A673 (cell line): ENCODE measurements at regions of chr7 and their contacts with region 1.

Region 1: GRCh38 chr7:29988424-29989256 is 961 bp downstream of the SCRN1 start:
- DNase-seq: peak; percentile 41
- H3K4me3 ChIP-seq: peak overlapping the region; percentile 100
- H3K27ac ChIP-seq: peak overlapping the region; percentile 93
- H3K4me1 ChIP-seq: peaks cover 16% of the 10 kb centered on the region
- H3K27me3 ChIP-seq: no peaks in the 10 kb centered on the region
- CTCF ChIP-seq: no peak

Region 2: GRCh38 chr7:29177963-29178600 is 810.6 kb before region 1 on chr7:
- CTCF ChIA-PET with region 1: no interaction called
- POLR2A ChIA-PET with region 1: interaction called, 15 read pairs
- intact Hi-C with region 1: no loop called
- DNase-seq: no peak
- H3K4me3 ChIP-seq: no peak overlapping the region
- H3K27ac ChIP-seq: no peak overlapping the region
- H3K4me1 ChIP-seq: peaks cover 4% of the 10 kb centered on the region
- H3K27me3 ChIP-seq: no peaks in the 10 kb centered on the region
- CTCF ChIP-seq: no peak

Region 3: GRCh38 chr7:30026229-30027064 is 37.8 kb after region 1 on chr7 and contains the start of gene FKBP14:
- CTCF ChIA-PET with region 1: no interaction called
- POLR2A ChIA-PET with region 1: interaction called, 5 read pairs
- intact Hi-C with region 1: loop called (anchors 2 kb)
- DNase-seq: peak; percentile 100
- H3K4me3 ChIP-seq: peak within 1 kb of the TSS; percentile 92
- H3K27ac ChIP-seq: peak within 1 kb of the TSS; percentile 81
- H3K4me1 ChIP-seq: peaks cover 22% of the 10 kb centered on the region
- H3K27me3 ChIP-seq: no peaks in the 10 kb centered on the region
- CTCF ChIP-seq: no peak
- total RNA-seq, gene FKBP14: 46.0 and 53.6 TPM in 2 replicates

Region 4: GRCh38 chr7:30548762-30549344 is 560.2 kb after region 1 on chr7:
- CTCF ChIA-PET with region 1: no interaction called
- POLR2A ChIA-PET with region 1: no interaction called
- intact Hi-C with region 1: no loop called
- DNase-seq: peak; percentile 85
- H3K4me3 ChIP-seq: no peak overlapping the region
- H3K27ac ChIP-seq: no peak overlapping the region
- H3K4me1 ChIP-seq: peaks cover 26% of the 10 kb centered on the region
- H3K27me3 ChIP-seq: no peaks in the 10 kb centered on the region
- CTCF ChIP-seq: peak; percentile 82